ENCODE measurements at regions of chr17 and their contacts with region 1.

Region 1: GRCh38 chr17:75012346-75013091 is at the start of gene MRPL58:
- DNase-seq: peak; percentile 81 to 88
- ATAC-seq: peak; percentile 93 to 95 (median 95)
- H3K4me3 ChIP-seq: peak within 1 kb of the TSS; percentile 76
- H3K4me3 Mint-ChIP-seq: peak within 1 kb of the TSS; percentile 95
- H3K27ac ChIP-seq: peak within 1 kb of the TSS; percentile 82
- H3K27ac Mint-ChIP-seq: peak within 1 kb of the TSS; percentile 88 to 95
- H3K4me1 ChIP-seq: peaks cover 16% of the 10 kb centered on the region
- H3K4me1 Mint-ChIP-seq: peaks cover 17 to 33% of the 10 kb centered on the region in 2 donors
- H3K27me3 ChIP-seq: no peaks in the 10 kb centered on the region
- H3K27me3 Mint-ChIP-seq: no peaks in the 10 kb centered on the region
- CTCF ChIP-seq: peak; percentile 59
- total RNA-seq, gene MRPL58: 9.0 to 15.7 (median 12.9) TPM

Region 2: GRCh38 chr17:74972107-74972972 is 40.2 kb before region 1 on chr17 and contains the start of gene HID1:
- intact Hi-C with region 1: no loop called
- DNase-seq: peak; percentile 55 to 87
- ATAC-seq: peak; percentile 73 to 92 (median 89)
- H3K4me3 ChIP-seq: peak within 1 kb of the TSS; percentile 42
- H3K4me3 Mint-ChIP-seq: peak within 1 kb of the TSS; percentile 83
- H3K27ac ChIP-seq: no peak within 1 kb of the TSS
- H3K27ac Mint-ChIP-seq: peak within 1 kb of the TSS in 1 of 2 donors; percentile 6
- H3K4me1 ChIP-seq: peaks cover 17% of the 10 kb centered on the region
- H3K4me1 Mint-ChIP-seq: peaks cover 6% of the 10 kb centered on the region in 2 donors
- H3K27me3 ChIP-seq: peaks cover 23% of the 10 kb centered on the region
- H3K27me3 Mint-ChIP-seq: peaks cover 6 to 25% of the 10 kb centered on the region in 2 donors
- CTCF ChIP-seq: no peak
- total RNA-seq, gene HID1: 0.66 to 9.5 (median 2.8) TPM

Region 3: DNA sequence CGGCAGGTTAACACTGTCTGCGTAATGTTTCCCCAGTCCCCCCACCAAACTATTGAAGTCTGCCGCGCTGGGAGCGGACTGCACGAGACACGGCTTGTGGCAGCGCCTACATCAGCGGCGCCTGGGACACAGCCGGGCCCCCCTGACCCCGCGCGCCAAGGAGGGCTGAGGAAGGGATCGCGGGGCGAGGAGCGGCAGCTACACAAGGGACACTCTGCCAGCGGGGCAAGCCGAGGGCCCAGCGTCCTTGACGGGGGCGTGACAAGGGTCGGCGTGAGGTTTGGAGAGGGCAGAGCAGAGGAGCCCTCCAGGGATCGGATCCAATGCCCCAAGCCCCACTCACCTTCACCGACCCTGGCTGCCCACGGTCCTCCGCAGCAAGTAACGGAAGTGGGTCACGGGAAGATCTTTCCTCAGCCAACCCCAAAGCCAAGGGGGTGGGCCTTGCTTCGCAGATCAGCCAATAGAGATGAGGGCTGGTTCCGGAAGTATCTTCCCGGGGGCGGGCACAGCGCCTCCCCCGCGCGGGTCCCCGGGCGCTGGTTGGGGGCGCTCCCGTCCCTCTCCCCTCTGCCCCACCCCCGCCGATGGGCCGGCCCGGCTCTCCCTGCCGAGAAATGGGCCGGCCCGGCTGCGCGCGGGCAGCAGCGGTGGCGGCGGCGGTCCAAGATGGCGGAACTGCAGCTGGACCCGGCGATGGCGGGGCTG is 34.2 kb after region 1 on chr17 and contains the starts of genes ATP5PD and KCTD2:
- intact Hi-C with region 1: loop called (anchors 2 kb)
- DNase-seq: peak; percentile 92 to 96
- ATAC-seq: peak; percentile 93 to 99 (median 95)
- H3K4me3 ChIP-seq: peak within 1 kb of the TSS; percentile 92
- H3K4me3 Mint-ChIP-seq: peak within 1 kb of the TSS; percentile 97
- H3K27ac ChIP-seq: peak within 1 kb of the TSS; percentile 81
- H3K27ac Mint-ChIP-seq: peak within 1 kb of the TSS; percentile 94 to 98
- H3K4me1 ChIP-seq: peaks cover 19% of the 10 kb centered on the region
- H3K4me1 Mint-ChIP-seq: peaks cover 33 to 34% of the 10 kb centered on the region in 2 donors
- H3K27me3 ChIP-seq: no peaks in the 10 kb centered on the region
- H3K27me3 Mint-ChIP-seq: no peaks in the 10 kb centered on the region
- CTCF ChIP-seq: no peak
- total RNA-seq, gene ATP5PD: 74.7 to 96.3 (median 75.2) TPM
- total RNA-seq, gene KCTD2: 17.4 to 27.0 (median 24.7) TPM

Region 4: DNA sequence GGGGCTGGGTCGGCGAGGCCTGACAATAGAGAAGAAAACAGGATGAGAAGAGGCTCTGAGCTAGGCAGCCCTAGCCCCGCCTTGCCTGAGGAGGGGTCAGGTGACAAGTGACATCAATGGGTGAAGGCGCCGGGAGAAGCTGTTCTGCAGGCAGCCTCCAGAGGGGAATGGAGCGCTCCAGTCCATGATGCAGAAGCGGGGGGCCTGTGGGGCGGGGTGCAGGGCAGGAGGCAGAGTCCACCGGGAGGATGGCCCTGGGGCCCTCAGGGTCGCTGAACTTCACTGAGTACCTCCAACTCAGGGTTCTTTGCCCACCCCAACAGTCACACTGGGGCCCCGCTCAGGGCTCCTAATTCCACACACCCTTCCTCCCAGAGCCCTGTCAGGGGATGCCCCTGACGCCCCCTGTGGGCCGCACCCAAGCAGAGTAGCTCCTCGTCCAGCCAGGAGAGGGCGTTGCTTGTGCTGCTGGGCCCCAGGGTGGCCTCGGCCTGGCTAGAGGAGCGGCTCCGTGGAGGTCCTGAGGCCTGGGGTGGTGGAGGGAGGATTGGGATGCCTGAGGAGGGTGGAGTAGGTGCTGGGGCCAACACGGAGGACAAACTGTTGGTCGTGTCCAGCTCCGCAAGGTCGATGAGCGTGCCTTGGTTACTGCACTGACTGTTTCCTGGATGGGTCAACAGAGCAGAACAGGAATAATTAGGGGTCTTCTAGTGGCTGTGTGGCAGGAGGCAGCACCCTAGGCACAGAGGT is 228.1 kb after region 1 on chr17:
- intact Hi-C with region 1: no loop called
- DNase-seq: peak in 1 of 2 donors; percentile 56
- ATAC-seq: peak in 2 of 3 donors; percentile 24 to 36
- H3K4me3 ChIP-seq: no peak overlapping the region
- H3K4me3 Mint-ChIP-seq: no peak overlapping the region
- H3K27ac ChIP-seq: no peak overlapping the region
- H3K27ac Mint-ChIP-seq: peak overlapping the region in 1 of 2 donors; percentile 54
- H3K4me1 ChIP-seq: peaks cover 47% of the 10 kb centered on the region
- H3K4me1 Mint-ChIP-seq: peaks cover 9 to 12% of the 10 kb centered on the region in 2 donors
- H3K27me3 ChIP-seq: no peaks in the 10 kb centered on the region
- H3K27me3 Mint-ChIP-seq: no peaks in the 10 kb centered on the region
- CTCF ChIP-seq: peak; percentile 25

Measured in natural killer cell (primary cell).